Prostate gland (tissue), 2 donors: ENCODE measurements at regions of chr13 and their contacts with region 1.

Region 1: DNA sequence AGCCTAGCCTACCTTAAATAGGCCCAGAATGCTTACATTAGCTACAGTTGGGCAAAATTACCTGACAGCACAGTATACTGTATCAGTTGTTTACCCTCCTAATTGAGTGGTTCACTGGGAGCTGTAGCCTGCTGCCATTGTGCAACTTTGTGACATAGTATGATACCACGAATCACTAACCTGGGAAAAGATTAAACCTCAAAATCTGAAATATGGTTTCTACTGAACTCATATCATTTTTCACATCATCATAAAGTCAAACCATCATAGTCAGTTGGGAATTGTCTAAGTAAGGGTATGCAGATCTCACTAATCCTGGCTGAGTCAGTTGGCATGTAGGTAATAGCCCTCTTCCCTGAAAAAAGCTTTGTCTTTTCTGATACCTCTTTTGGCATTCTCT is 9.2 kb downstream of the PAN3 start:
- DNase-seq: no peak
- H3K4me3 ChIP-seq: no peak overlapping the region
- H3K27ac ChIP-seq: no peak overlapping the region
- H3K4me1 ChIP-seq: no peaks in the 10 kb centered on the region
- H3K27me3 ChIP-seq: no peaks in the 10 kb centered on the region
- CTCF ChIP-seq: no peak
- POLR2A ChIP-seq: no peak

Region 2: GRCh38 chr13:28273919-28274318 is 126.4 kb after region 1 on chr13:
- intact Hi-C with region 1: loop called (anchors 10 kb)
- DNase-seq: no peak
- H3K4me3 ChIP-seq: no peak overlapping the region
- H3K27ac ChIP-seq: no peak overlapping the region
- H3K4me1 ChIP-seq: no peaks in the 10 kb centered on the region
- H3K27me3 ChIP-seq: no peaks in the 10 kb centered on the region
- CTCF ChIP-seq: no peak
- POLR2A ChIP-seq: no peak

Region 3: GRCh38 chr13:28423010-28423409 is 275.5 kb after region 1 on chr13:
- intact Hi-C with region 1: no loop called
- DNase-seq: no peak
- H3K4me3 ChIP-seq: no peak overlapping the region
- H3K27ac ChIP-seq: no peak overlapping the region
- H3K4me1 ChIP-seq: no peaks in the 10 kb centered on the region
- H3K27me3 ChIP-seq: no peaks in the 10 kb centered on the region
- CTCF ChIP-seq: no peak
- POLR2A ChIP-seq: no peak